Right ventricle myocardium superior (tissue), 1 donor: ENCODE measurements at regions of chr17 and their contacts with region 1.

Region 1: GRCh38 chr17:17237026-17237799 is at the start of gene FLCN:
- DNase-seq: peak; percentile 98
- ATAC-seq: peak; percentile 97
- total RNA-seq, gene FLCN: 52.3 TPM

Region 2: GRCh38 chr17:17141860-17142552 is 95.2 kb before region 1 on chr17:
- intact Hi-C with region 1: no loop called
- DNase-seq: peak; percentile 58
- ATAC-seq: peak; percentile 56

Region 3: DNA sequence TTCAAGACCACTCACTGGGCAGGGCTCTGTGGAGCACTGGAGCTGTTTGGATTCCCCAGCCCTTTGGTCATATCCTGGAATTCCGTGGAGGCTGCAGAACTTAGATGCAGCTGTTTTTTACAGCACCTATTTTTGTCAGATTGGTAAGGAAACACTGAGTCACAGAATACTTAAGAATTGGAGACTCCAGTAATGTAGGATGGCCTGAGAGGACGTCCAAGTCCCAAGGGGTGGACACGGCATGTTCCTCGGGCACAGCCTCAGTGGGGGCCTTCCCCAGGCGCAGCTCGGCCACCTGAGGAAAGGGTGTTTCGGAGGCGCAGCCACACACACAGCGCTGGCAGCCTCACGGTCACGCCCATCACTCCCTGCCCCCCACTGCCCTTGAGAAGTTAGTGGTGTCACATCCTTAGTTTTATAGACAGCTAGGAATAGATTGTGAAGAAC is 45.8 kb before region 1 on chr17:
- intact Hi-C with region 1: no loop called
- DNase-seq: peak; percentile 71
- ATAC-seq: peak; percentile 80

Region 4: GRCh38 chr17:17280613-17281549 is 43.7 kb after region 1 on chr17 and contains the start of gene COPS3:
- intact Hi-C with region 1: loop called (anchors 2 kb)
- DNase-seq: peak; percentile 99
- ATAC-seq: peak; percentile 98
- total RNA-seq, gene COPS3: 72.9 TPM